Ovary (tissue), 10 donors: ENCODE measurements at regions of chr1 and their contacts with region 1.

Region 1: DNA sequence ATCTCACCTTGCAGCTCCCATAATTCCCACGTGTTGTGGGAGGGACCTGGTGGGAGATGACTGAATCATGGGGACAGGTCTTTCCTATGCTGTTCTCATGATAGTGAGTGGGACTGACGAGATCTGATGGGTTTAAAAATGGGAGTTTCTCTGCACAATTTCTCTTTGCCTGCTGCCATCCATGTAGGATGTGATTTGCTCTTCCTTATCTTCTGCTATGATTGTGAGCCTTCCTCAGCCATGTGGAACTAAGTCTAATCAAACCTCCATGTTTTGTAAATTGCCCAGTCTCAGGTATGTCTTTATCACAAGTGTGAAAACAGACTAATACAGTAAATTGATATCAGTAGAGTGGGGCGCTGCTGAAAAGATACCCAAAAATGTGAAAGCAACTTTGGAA is 195.7 kb downstream of the SLC44A5 start:
- DNase-seq: no peak
- H3K4me3 ChIP-seq: no peak overlapping the region
- H3K27ac ChIP-seq: no peak overlapping the region
- H3K4me1 ChIP-seq: no peaks in the 10 kb centered on the region
- H3K27me3 ChIP-seq: no peaks in the 10 kb centered on the region
- CTCF ChIP-seq: no peak
- EP300 ChIP-seq: no peak
- POLR2A ChIP-seq: no peak

Region 2: DNA sequence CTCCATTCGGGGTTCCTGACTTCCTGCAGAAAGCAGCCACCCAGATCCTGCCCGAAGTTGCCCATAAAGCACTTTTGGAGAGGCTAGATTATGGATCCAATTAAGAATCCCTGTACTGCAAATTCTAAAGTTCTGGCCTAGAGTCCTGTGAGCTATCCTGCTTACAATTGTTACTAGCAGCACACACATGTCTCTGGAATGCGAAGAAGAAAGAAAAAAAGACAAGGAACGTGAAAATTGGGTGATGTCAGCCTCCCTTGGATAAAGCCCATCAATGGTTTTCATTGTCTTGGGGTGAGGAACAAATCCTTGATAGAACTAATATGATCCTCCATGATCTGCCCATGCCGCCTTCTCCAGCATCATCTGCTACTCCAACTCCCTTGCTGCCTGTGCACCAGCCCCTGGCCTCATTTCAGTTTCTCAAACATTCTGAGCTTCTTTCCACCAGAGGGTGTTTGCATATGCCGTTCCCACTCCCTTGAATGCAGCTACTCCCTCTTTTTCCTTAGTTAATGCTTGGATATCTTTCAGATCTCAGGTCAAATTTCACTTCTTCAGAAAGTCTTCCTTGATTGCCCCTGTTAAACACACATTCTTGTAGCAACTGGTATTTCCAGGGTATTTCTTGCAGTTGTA is 1546.1 kb after region 1 on chr1:
- intact Hi-C with region 1: loop called in 1 of 4 experiments (anchors 5 kb)
- DNase-seq: no peak
- H3K4me3 ChIP-seq: no peak overlapping the region
- H3K27ac ChIP-seq: no peak overlapping the region
- H3K4me1 ChIP-seq: no peaks in the 10 kb centered on the region
- H3K27me3 ChIP-seq: no peaks in the 10 kb centered on the region
- CTCF ChIP-seq: no peak
- EP300 ChIP-seq: no peak
- POLR2A ChIP-seq: no peak